HEK293 (cell line): ENCODE measurements at regions of chr1 and their contacts with region 1.

Region 1: DNA sequence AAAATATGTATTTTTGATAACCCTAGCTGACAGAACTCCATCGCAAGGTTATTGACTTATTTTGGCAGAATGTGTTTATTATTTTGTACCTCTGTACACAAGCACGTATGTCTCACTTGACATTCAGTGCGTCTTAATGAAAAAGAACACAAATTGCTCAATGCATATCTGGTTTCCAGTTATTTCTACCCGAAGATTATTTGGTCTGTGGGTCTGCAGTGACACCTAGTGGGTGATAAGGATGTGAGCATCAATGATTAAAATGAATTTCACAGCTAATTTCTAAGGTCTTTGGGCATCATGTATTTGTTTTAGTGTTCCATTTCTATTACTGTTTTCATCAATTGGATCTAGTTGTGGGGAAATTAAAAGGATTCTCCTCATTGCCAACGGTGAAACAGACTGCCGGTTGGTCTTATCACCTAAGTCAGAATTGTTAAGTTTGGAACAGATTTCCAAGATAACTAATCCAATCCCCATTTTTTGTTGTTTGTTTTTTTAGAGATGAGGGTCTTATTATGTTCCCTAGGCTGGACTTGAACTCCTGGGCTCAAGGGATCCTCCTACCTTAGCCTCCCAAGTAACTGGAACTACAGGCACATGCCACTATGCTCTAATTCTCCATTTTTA is 13.9 kb downstream of the DDX20 start:
- H3K4me3 ChIP-seq: no peak overlapping the region
- H3K27ac ChIP-seq: no peak overlapping the region
- H3K4me1 ChIP-seq: no peaks in the 10 kb centered on the region
- CTCF ChIP-seq: peak; percentile 54

Region 2: GRCh38 chr1:111481387-111482221 is 288.0 kb before region 1 on chr1:
- CTCF ChIA-PET with region 1: interaction called, 12 read pairs
- POLR2A ChIA-PET with region 1: no interaction called
- H3K4me3 ChIP-seq: no peak overlapping the region
- H3K27ac ChIP-seq: no peak overlapping the region
- H3K4me1 ChIP-seq: no peaks in the 10 kb centered on the region
- CTCF ChIP-seq: peak; percentile 92

Region 3: GRCh38 chr1:111755331-111756123 is 14.1 kb before region 1 on chr1 and contains the start of gene DDX20:
- CTCF ChIA-PET with region 1: interaction called, 38 read pairs
- POLR2A ChIA-PET with region 1: interaction called, 5 read pairs
- H3K4me3 ChIP-seq: peak within 1 kb of the TSS; percentile 91
- H3K27ac ChIP-seq: peak within 1 kb of the TSS; percentile 72
- H3K4me1 ChIP-seq: peaks cover 4% of the 10 kb centered on the region; the same call in 1 of the 2 replicates
- CTCF ChIP-seq: peak; percentile 97